Pancreas (tissue), 10 donors: ENCODE measurements at regions of chr1 and their contacts with region 1.

Region 1: DNA sequence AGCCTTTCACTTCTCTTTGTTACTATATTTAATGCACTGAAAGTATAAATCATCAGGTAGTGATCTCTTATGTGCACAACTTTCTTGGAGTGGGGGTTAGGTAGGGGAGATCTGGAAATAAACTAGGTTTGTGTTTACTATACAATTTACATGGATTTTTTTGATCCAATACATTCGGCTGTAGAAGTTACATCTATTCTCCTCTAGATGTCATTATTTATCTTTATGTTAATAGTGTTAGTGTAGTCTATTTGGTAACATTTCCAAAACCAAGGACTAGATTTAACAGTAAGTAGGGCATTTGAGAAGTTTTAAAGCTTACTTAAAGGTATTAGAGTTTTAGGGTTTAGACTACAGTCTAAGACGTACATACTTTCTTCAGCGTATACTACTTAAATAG is 5.4 kb downstream of the VPS45 start:
- DNase-seq: no peak
- ATAC-seq: peak in 2 of 4 donors; percentile 44 to 56
- H3K4me3 ChIP-seq: no peak overlapping the region
- H3K27ac ChIP-seq: no peak overlapping the region
- H3K4me1 ChIP-seq: no peaks in the 10 kb centered on the region
- H3K27me3 ChIP-seq: no peaks in the 10 kb centered on the region
- CTCF ChIP-seq: no peak

Region 2: DNA sequence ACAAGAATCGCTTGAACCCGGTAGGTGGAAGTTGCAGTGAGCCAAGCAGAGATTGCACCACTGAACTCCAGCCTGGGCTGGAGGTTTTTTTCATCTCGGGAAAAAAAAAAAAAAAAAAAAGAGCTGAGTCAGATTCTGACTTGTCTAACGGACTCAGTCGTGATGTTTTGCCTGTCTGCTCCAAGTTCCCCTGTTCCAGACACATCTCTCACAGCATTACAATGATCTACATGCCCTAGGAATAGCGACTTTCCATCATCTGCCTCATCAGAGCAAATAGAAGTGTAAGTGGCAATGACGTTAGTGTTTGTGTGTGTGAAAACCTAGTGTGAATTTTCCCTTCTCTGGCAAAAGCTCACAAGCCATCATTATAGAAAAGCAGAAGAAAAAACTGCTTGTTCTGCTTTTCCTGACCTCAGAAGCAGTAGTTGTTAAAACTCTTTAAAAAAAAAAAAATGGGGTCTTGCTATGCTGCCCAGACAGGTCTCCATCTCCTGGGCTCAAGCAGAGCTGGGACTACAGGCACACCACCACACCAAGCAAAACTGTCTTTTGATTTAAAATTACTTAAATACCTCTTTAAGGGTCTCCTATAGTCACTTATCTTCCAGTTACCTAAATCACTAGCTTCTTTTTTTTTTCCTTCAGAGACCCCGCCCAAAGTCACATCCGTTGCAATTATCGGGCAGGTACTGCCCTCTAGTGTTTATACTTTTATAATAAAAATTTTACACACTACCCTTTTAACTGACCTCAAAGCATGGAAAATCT is 114.0 kb after region 1 on chr1:
- intact Hi-C with region 1: loop called in 1 of 3 experiments (anchors 10 kb)
- DNase-seq: no peak
- ATAC-seq: peak; percentile 70 to 86 (median 82)
- H3K4me3 ChIP-seq: no peak overlapping the region
- H3K27ac ChIP-seq: peak overlapping the region in 1 of 4 donors; percentile 46
- H3K4me1 ChIP-seq: peaks cover 0 to 6% (median 0%) of the 10 kb centered on the region in 3 donors
- H3K27me3 ChIP-seq: no peaks in the 10 kb centered on the region
- CTCF ChIP-seq: peak in 3 of 4 donors; percentile 16 to 35 (median 28)